ENCODE measurements at regions of chr16 and their contacts with region 1.

Region 1: GRCh38 chr16:71746442-71747046 is 22.0 kb upstream of the PHLPP2 start:
- DNase-seq: peak in 1 of 2 experiments; percentile 54
- H3K4me3 ChIP-seq: no peak overlapping the region
- H3K4me3 Mint-ChIP-seq: no peak overlapping the region
- H3K27ac Mint-ChIP-seq: no peak overlapping the region
- H3K4me1 ChIP-seq: no peaks in the 10 kb centered on the region
- H3K4me1 Mint-ChIP-seq: no peaks in the 10 kb centered on the region
- H3K27me3 ChIP-seq: no peaks in the 10 kb centered on the region
- H3K27me3 Mint-ChIP-seq: no peaks in the 10 kb centered on the region
- CTCF ChIP-seq: peak; percentile 78 to 88

Region 2: DNA sequence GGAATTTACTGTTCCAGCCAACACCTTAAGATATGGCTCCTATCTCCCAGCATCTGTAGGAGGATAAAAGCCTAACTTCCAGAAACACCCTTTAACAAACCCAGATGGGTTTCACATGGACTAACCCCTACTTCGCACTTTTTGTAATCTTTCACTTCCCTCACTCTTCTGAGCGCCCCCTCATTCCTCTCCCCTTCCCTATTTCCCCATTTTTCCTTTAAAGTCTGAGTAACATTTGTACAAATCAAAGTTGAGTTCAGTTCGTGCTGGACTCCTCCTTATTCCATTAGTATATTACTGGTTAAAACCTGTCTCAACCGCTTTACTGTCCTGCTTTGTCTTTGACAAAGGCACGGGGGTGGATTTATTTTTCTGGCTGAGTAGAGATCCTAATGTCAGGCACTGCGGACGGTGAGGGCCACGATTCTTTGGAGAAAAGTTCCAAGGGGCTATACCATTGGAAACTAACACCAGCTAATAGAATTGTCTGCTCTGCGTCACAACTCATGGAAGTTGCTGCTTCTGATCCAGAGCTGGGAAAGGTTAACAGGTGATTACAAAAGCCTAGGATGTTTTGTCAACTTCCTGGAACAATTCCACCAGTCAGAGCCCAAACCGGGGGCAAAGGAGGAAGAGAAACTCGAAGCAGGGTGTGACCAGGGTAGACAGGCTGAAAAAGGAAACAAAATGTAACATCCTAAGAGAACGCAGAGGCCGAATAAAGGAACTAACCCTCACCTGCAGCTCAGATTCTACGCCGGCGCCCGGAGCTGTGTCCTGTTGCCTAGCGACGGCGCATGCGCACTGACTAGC is 182.2 kb before region 1 on chr16:
- CTCF ChIA-PET with region 1: interaction called, 5 read pairs
- POLR2A ChIA-PET with region 1: no interaction called
- intact Hi-C with region 1: loop called (anchors 1 kb)
- DNase-seq: no peak
- H3K4me3 ChIP-seq: peak overlapping the region; percentile 44
- H3K4me3 Mint-ChIP-seq: peak overlapping the region; percentile 94
- H3K27ac Mint-ChIP-seq: peak overlapping the region; percentile 97
- H3K4me1 ChIP-seq: peaks cover 8% of the 10 kb centered on the region; the same call in 1 of the 2 replicates
- H3K4me1 Mint-ChIP-seq: peaks cover 20% of the 10 kb centered on the region
- H3K27me3 ChIP-seq: no peaks in the 10 kb centered on the region
- H3K27me3 Mint-ChIP-seq: no peaks in the 10 kb centered on the region
- CTCF ChIP-seq: no peak

Region 3: DNA sequence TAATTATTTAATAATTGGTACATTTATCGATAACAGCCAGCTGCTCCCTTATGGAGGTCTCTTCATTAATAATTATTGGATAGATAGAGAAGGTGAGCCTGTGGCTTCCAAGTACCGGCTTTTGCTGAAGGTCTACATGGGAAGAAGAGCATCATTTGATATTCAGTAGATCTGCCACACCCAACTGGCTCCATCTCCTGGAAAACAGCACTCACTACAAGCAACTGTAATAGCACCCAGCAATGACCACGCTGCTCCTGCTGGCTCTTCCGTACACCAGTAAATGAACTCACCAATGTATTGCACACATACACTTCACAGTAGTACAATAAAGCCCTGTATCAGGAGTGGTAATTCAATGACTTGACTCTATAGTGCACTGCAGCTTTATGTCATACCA is 101.1 kb before region 1 on chr16:
- CTCF ChIA-PET with region 1: no interaction called
- POLR2A ChIA-PET with region 1: no interaction called
- intact Hi-C with region 1: loop called (anchors 5 kb)
- DNase-seq: peak in 1 of 2 experiments; percentile 57
- H3K4me3 ChIP-seq: no peak overlapping the region
- H3K4me3 Mint-ChIP-seq: no peak overlapping the region
- H3K27ac Mint-ChIP-seq: no peak overlapping the region
- H3K4me1 ChIP-seq: no peaks in the 10 kb centered on the region
- H3K4me1 Mint-ChIP-seq: no peaks in the 10 kb centered on the region
- H3K27me3 ChIP-seq: no peaks in the 10 kb centered on the region
- H3K27me3 Mint-ChIP-seq: no peaks in the 10 kb centered on the region
- CTCF ChIP-seq: peak; percentile 74 to 75

Region 4: GRCh38 chr16:71669932-71670536 is 76.5 kb before region 1 on chr16:
- CTCF ChIA-PET with region 1: interaction called, 3 read pairs
- POLR2A ChIA-PET with region 1: no interaction called
- intact Hi-C with region 1: loop called (anchors 1 kb)
- DNase-seq: peak in 1 of 2 experiments; percentile 27
- H3K4me3 ChIP-seq: no peak overlapping the region
- H3K4me3 Mint-ChIP-seq: no peak overlapping the region
- H3K27ac Mint-ChIP-seq: peak overlapping the region; percentile 23
- H3K4me1 ChIP-seq: peaks cover 58% of the 10 kb centered on the region
- H3K4me1 Mint-ChIP-seq: peaks cover 45% of the 10 kb centered on the region
- H3K27me3 ChIP-seq: no peaks in the 10 kb centered on the region
- H3K27me3 Mint-ChIP-seq: no peaks in the 10 kb centered on the region
- CTCF ChIP-seq: peak in 1 of 2 experiments; percentile 35

Region 5: DNA sequence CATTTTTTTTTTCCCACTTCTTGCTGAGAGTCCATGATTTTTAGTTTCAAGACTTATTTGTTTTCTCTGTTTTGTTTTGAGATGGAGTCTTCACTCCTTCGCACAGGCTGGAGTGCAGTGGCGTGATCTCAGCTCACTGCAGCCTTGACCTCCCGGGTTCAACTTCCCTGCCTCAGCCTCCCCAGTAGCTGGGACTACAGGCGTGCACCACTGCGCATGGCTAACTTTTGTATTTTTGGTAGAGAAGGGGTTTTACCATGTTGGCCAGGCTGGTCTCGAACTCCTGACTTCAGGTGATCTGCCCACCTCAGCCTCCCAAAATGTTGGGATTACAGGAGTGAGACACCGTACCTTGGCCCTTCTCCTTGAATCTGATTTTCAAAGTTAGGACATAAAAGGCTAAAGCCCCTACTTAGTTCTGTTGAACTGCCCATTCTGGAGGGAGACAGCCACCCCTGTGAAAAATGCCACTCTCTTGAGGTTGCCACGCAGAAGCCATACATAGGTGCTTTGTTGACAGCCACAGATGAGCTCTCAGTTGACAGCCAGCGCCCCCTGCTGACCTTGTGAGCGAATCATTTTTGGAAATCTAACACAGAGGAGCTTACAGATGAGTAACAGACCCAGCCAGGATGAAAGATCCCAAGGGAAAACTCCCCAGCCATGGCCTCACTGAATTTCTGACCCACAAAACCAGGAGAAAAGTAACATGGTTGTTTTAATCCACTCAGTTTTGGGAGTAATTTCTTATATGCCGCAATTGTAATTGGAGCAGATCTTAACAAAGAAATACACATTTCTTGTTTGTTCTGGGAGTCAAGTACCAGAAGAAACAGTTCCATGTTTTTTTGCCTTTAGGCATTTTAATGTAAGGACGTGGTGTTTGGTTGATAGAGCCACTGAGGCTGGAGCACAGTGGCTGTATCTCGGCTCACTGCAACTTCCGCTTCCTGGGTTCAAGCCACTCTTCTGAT is 214.8 kb after region 1 on chr16:
- CTCF ChIA-PET with region 1: interaction called, 5 read pairs
- POLR2A ChIA-PET with region 1: no interaction called
- intact Hi-C with region 1: loop called (anchors 5 kb)
- DNase-seq: peak; percentile 85 to 87
- H3K4me3 ChIP-seq: no peak overlapping the region
- H3K4me3 Mint-ChIP-seq: no peak overlapping the region
- H3K27ac Mint-ChIP-seq: no peak overlapping the region
- H3K4me1 ChIP-seq: no peaks in the 10 kb centered on the region
- H3K4me1 Mint-ChIP-seq: peaks cover 9% of the 10 kb centered on the region
- H3K27me3 ChIP-seq: no peaks in the 10 kb centered on the region
- H3K27me3 Mint-ChIP-seq: peaks cover 6% of the 10 kb centered on the region
- CTCF ChIP-seq: peak; percentile 92 to 94